Activated T-helper 1 cell treated with anti-CD3 and anti-CD28 coated beads, Interleukin-12 subunit alpha, Interleukin-12 subunit beta, Interleukin-2, Interleukin-4 antibody, amounts not matched to agents 30 ng/mL and 10 ng/mL and 1 ng/mL, durations not matched to agents 14 hours and 24 hours and 36 hours (primary cell): ENCODE measurements at regions of chr3 and their contacts with region 1.

Region 1: GRCh38 chr3:32684800-32685542 is at the start of gene CNOT10:
- DNase-seq: peak; percentile 96
- H3K4me3 Mint-ChIP-seq: peak within 1 kb of the TSS; percentile 94
- H3K27ac Mint-ChIP-seq: peak within 1 kb of the TSS; percentile 89
- H3K4me1 Mint-ChIP-seq: peaks cover 30% of the 10 kb centered on the region
- H3K27me3 Mint-ChIP-seq: peaks cover 2% of the 10 kb centered on the region
- total RNA-seq, gene CNOT10: 55.5 and 71.3 TPM in 2 replicates

Region 2: DNA sequence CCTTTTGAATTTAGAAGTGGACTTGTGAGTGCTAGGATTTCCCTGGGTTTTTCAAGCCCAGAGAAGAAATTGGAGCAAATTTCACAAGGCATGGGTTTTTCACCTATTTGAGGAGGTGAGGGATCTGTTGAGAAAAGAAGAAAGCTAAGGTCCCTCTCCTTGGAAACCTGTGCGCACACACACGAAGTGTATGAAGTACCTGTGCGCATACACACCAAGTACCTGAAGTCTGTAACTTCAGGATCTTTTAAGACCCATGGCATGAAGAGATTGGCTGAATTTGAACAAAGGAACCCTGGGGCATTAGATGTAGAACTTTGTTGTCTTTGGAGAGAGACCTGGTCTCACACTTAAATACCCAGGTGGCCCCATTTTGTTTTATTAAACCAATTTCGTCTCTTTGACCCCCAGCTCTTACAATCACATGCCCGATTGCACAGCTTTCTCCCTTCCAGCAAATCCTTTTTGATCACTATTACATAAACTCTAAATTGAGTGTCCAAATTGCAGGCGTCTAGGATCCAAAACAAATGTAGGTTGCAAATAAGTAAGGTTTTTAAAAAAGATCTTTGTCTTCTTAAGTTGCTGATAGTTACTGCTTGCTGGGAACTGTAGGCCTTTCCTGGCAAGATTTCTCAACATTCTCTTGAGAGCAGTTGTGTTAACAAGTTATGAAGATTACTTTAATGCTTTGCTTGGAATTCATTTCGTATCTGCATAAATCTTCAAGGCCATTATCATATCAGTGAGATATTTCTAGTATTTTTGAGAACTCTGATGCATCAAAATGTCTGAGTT is 382.2 kb before region 1 on chr3:
- intact Hi-C with region 1: loop called (anchors 10 kb)
- DNase-seq: no peak
- H3K4me3 Mint-ChIP-seq: peak overlapping the region; percentile 48
- H3K27ac Mint-ChIP-seq: peak overlapping the region; percentile 85
- H3K4me1 Mint-ChIP-seq: peaks cover 70% of the 10 kb centered on the region
- H3K27me3 Mint-ChIP-seq: no peaks in the 10 kb centered on the region

Region 3: DNA sequence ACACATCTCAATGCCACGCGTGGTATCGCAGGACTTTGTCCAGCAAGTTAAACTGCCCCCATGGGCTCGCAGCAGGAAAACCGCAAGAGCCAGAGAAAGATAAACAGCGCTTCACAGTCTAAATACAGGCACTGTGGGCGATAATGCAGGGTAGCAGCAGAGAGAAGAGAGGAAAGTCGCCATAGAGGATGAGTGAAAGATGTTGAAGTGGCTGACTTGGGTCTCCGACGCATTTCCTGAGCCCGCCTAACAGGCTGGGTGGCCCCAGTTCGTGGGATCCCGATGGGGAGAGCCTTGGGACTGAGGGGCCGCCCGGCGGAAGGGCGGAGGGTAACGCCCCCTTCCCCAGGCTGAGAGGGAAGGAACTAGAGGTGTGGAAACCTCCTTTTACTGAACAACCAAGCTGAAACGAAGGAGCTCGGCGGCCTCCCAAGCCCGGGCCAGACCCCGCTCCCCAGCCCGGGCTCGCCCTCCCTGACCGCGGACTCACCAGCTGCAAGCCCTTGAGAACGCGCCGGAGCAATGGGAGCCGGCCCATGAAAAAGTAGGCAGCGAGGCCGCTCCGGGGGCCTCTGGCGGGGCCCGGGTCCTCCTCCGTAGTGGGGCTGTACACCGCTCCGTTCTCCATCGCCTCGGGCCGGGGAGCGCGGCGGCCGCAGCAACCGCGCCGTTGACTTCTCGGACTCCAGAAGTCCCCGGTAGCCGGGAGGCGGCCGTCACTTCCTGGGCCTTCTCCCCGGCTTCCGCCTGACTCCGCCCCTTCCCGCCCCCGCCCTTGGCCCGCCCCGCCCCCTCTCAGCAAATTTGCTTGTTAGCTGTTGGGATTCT is 182.6 kb before region 1 on chr3 and contains the start of gene CMTM6:
- intact Hi-C with region 1: loop called (anchors 1 kb)
- DNase-seq: peak; percentile 66
- H3K4me3 Mint-ChIP-seq: peak within 1 kb of the TSS; percentile 100
- H3K27ac Mint-ChIP-seq: peak within 1 kb of the TSS; percentile 96
- H3K4me1 Mint-ChIP-seq: peaks cover 41% of the 10 kb centered on the region
- H3K27me3 Mint-ChIP-seq: peaks cover 3% of the 10 kb centered on the region
- total RNA-seq, gene CMTM6: 94.2 and 96.4 TPM in 2 replicates

Region 4: GRCh38 chr3:32781210-32781968 is 96.4 kb after region 1 on chr3:
- intact Hi-C with region 1: loop called (anchors 1 kb)
- DNase-seq: peak; percentile 59
- H3K4me3 Mint-ChIP-seq: peak overlapping the region; percentile 84
- H3K27ac Mint-ChIP-seq: peak overlapping the region; percentile 19
- H3K4me1 Mint-ChIP-seq: peaks cover 5% of the 10 kb centered on the region
- H3K27me3 Mint-ChIP-seq: peaks cover 7% of the 10 kb centered on the region

Region 5: GRCh38 chr3:33063651-33064051 is 378.7 kb after region 1 on chr3:
- intact Hi-C with region 1: loop called (anchors 10 kb)
- DNase-seq: no peak
- H3K4me3 Mint-ChIP-seq: peak overlapping the region; percentile 2
- H3K27ac Mint-ChIP-seq: peak overlapping the region; percentile 93
- H3K4me1 Mint-ChIP-seq: peaks cover 57% of the 10 kb centered on the region
- H3K27me3 Mint-ChIP-seq: no peaks in the 10 kb centered on the region

Region 6: GRCh38 chr3:33440323-33441232 is 755.6 kb after region 1 on chr3 and contains the start of gene UBP1:
- intact Hi-C with region 1: loop called (anchors 1 kb)
- DNase-seq: peak; percentile 99
- H3K4me3 Mint-ChIP-seq: peak within 1 kb of the TSS; percentile 100
- H3K27ac Mint-ChIP-seq: peak within 1 kb of the TSS; percentile 100
- H3K4me1 Mint-ChIP-seq: peaks cover 54% of the 10 kb centered on the region
- H3K27me3 Mint-ChIP-seq: no peaks in the 10 kb centered on the region
- total RNA-seq, gene UBP1: 69.4 and 71.6 TPM in 2 replicates